ENCODE measurements at regions of chr12 and their contacts with region 1.

Region 1: GRCh38 chr12:131836193-131836592 is 8.0 kb downstream of the MMP17 start:
- DNase-seq: peak; percentile 75
- H3K4me3 ChIP-seq: no peak overlapping the region
- H3K27ac ChIP-seq: no peak overlapping the region
- H3K4me1 ChIP-seq: peaks cover 3 to 21% of the 10 kb centered on the region in 2 experiments; a peak in 1 of 4 replicates
- H3K27me3 ChIP-seq: no peaks in the 10 kb centered on the region
- CTCF ChIP-seq: peak; percentile 62
- EP300 ChIP-seq: no peak
- RAD21 ChIP-seq: peak; percentile 61

Region 2: DNA sequence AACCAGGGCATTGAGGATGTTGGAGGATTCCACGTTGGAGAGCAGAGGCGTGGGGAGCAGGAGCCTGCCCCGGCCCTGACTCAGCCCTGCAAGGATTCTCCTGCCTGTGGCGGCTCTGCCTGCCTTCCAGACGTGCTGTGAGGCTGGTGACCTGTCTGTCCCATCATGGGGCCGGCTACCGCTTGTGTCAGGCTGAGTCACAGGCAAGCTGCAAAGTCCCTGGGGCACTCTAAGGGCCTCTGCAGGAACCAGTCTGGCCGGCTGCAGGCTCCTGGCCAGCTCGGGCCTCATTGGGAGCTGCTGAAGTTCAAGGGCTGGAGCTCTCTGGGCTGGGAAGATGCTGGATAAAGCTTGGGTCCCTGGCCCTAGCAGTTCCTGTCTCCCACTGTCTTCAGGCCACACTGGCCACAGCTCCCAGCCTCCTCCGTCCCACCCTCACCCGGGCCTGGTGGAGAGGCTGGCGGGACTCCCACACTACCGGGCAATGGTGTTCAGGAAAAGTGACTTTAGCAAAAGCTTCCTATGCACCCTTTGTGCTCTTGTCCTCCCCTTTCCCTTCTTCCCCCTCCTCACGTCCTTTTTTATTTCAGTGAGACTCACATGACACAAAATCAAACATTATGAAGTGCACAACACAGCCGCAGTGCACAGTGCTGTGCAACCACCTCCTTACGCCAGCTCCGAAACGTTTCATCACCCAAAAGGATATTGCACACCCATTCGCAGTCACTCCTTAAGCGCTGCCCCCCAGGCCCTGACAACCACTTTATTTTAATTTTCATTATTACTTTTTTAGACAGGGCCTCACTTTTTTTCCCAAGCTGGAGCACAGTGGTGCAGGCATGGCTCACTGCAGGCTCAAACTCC is 36.2 kb after region 1 on chr12:
- CTCF ChIA-PET with region 1: interaction called, 13 read pairs
- POLR2A ChIA-PET with region 1: no interaction called
- DNase-seq: peak; percentile 42
- H3K4me3 ChIP-seq: no peak overlapping the region
- H3K27ac ChIP-seq: no peak overlapping the region; a peak in 1 of 4 replicates
- H3K4me1 ChIP-seq: peaks cover 4 to 7% of the 10 kb centered on the region in 2 experiments; a peak in 2 of 4 replicates
- H3K27me3 ChIP-seq: no peaks in the 10 kb centered on the region
- CTCF ChIP-seq: no peak
- EP300 ChIP-seq: no peak
- RAD21 ChIP-seq: no peak

Region 3: DNA sequence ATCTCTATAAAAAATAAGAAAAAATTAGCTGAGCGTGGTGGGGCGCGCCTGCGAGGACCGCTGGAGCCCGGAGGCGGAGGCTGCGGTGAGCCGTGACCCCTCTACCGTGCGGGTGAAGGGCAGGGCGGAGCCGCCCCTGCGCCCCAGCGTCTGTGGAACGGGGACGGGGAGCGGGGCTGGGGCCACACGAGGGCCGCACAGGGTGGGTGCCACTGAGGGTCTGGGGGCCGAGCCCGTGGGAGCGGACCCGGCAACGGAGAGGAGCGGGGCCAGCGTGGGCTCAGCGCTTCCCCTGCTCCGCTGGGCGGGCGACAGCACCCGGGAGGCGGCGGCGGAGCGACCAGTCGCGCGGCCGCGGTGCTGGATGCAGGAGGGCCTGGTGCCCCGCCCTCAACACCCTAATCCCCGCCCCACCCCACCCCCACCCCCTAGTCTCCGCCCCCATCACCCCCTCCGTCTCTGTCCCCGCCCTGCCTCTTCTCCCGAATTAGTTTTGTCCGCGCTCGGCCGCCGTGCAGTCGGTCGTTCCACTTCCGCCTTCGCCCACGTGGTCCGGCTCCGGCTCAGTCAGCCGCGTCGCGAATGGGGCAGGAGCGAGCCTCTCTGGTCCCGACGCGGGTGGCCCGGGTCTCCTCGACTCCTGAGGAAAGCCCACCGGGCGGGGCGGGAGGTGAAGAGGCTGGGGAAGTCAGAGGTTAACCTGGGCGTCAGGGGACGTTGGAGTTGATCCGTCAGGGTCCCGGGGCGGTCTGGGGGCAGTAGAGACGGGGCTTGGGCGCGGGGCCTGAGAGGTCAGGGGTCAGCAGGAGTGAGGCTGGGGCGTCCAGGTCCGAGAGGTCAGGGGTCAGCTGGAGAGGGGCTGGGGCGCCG is 92.8 kb after region 1 on chr12 and contains the start of gene PUS1:
- CTCF ChIA-PET with region 1: interaction called, 17 read pairs
- POLR2A ChIA-PET with region 1: no interaction called
- DNase-seq: peak; percentile 100
- H3K4me3 ChIP-seq: peak within 1 kb of the TSS; percentile 83 to 89
- H3K27ac ChIP-seq: peak within 1 kb of the TSS; percentile 35 to 75; a peak in 3 of 4 replicates
- H3K4me1 ChIP-seq: peaks cover 3 to 7% of the 10 kb centered on the region in 2 experiments; a peak in 1 of 4 replicates
- H3K27me3 ChIP-seq: no peaks in the 10 kb centered on the region
- CTCF ChIP-seq: no peak
- EP300 ChIP-seq: no peak
- RAD21 ChIP-seq: no peak
- polyA plus RNA-seq, gene PUS1: 52.1 and 53.1 TPM in 2 replicates